ENCODE measurements at regions of chr1 and their contacts with region 1.

Region 1: GRCh38 chr1:152440635-152441471 is 26.8 kb upstream of the CRNN start:
- DNase-seq: peak; percentile 57
- H3K4me3 ChIP-seq: no peak overlapping the region
- H3K27ac ChIP-seq: no peak overlapping the region
- H3K4me1 ChIP-seq: no peaks in the 10 kb centered on the region
- H3K27me3 ChIP-seq: peaks cover 0 to 4% of the 10 kb centered on the region in 2 experiments
- CTCF ChIP-seq: peak; percentile 73 to 87
- POLR2A ChIP-seq: no peak

Region 2: DNA sequence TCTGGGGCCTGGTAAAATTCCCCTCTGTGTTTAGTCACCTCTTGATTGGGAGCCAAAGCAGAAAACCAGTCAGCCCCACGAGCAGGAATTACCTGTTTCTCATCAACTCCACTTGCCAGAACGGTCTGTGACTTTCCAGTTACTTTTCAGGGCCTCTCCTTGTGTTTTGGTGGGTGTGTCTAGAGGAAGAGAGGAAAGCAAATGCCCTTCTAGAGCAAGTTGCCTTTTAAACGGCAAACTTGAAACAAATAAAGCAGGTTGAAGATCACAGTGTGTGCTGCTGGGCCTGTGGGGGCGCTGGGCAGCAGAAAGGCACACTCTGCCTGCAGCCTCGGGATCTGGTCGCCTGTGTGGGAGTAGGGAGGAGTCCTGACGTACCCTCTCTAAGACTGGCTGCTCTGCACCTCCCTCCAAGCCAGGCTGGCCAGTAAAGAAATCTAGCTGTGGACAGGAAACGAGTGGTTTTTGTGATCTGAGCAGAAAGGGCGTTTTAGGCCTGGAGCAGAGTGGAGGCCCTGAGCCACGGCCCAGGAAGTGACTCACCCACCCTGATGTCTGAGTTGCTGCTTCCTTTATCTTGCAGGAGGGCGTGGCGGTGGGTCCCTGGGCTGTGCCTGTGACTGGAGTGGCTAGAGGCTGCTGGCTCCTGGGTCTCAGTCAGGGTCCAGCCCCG is 393.0 kb before region 1 on chr1:
- CTCF ChIA-PET with region 1: interaction called, 3 read pairs
- POLR2A ChIA-PET with region 1: no interaction called
- dilution Hi-C with region 1: no loop called
- intact Hi-C with region 1: loop called (anchors 2 kb)
- DNase-seq: peak; percentile 91
- H3K4me3 ChIP-seq: no peak overlapping the region
- H3K27ac ChIP-seq: peak overlapping the region; percentile 25
- H3K4me1 ChIP-seq: peaks cover 18% of the 10 kb centered on the region
- H3K27me3 ChIP-seq: peaks cover 7 to 27% of the 10 kb centered on the region in 2 experiments
- CTCF ChIP-seq: peak; percentile 61 to 80
- POLR2A ChIP-seq: no peak

Region 3: DNA sequence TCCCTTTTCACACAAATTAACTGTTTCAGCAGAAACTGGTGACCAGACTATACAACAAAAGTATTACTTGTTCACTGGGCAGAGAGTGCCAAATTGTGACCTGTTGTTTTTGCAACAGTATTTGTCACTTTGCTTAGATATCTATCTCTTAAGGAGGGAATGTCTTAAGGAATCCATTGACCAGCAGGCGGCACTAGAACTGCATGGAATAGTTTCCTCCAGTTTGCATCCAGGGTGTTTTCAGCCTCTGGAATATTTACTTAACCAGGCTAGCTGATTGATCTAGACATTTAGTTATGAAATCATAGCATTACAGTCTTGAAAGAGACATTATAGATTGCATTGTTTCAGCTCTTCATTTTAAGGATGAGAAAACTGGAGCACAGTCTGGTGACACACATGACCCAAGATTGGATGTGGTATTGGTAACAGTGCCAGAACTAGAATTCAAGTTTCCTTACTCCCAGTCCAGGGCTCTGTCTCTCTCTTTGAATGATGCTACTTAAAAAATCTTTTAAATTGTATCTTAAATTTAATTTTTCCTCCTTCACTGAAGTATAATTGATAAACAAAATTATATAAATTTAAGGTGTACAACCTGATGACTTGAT is 298.8 kb before region 1 on chr1:
- CTCF ChIA-PET with region 1: interaction called, 4 read pairs
- POLR2A ChIA-PET with region 1: no interaction called
- dilution Hi-C with region 1: no loop called
- intact Hi-C with region 1: loop called (anchors 1 kb)
- DNase-seq: peak; percentile 57
- H3K4me3 ChIP-seq: no peak overlapping the region
- H3K27ac ChIP-seq: no peak overlapping the region
- H3K4me1 ChIP-seq: no peaks in the 10 kb centered on the region
- H3K27me3 ChIP-seq: no peaks in the 10 kb centered on the region
- CTCF ChIP-seq: peak; percentile 63 to 65
- POLR2A ChIP-seq: no peak

Region 4: GRCh38 chr1:152189657-152190442 is 251.0 kb before region 1 on chr1:
- CTCF ChIA-PET with region 1: interaction called, 22 read pairs
- POLR2A ChIA-PET with region 1: no interaction called
- dilution Hi-C with region 1: no loop called
- intact Hi-C with region 1: loop called (anchors 1 kb)
- DNase-seq: peak; percentile 65
- H3K4me3 ChIP-seq: peak overlapping the region in 2 of 3 experiments; percentile 43 to 48
- H3K27ac ChIP-seq: no peak overlapping the region
- H3K4me1 ChIP-seq: peaks cover 5% of the 10 kb centered on the region
- H3K27me3 ChIP-seq: peaks cover 0 to 4% of the 10 kb centered on the region in 2 experiments
- CTCF ChIP-seq: peak; percentile 65 to 72
- POLR2A ChIP-seq: no peak

Region 5: DNA sequence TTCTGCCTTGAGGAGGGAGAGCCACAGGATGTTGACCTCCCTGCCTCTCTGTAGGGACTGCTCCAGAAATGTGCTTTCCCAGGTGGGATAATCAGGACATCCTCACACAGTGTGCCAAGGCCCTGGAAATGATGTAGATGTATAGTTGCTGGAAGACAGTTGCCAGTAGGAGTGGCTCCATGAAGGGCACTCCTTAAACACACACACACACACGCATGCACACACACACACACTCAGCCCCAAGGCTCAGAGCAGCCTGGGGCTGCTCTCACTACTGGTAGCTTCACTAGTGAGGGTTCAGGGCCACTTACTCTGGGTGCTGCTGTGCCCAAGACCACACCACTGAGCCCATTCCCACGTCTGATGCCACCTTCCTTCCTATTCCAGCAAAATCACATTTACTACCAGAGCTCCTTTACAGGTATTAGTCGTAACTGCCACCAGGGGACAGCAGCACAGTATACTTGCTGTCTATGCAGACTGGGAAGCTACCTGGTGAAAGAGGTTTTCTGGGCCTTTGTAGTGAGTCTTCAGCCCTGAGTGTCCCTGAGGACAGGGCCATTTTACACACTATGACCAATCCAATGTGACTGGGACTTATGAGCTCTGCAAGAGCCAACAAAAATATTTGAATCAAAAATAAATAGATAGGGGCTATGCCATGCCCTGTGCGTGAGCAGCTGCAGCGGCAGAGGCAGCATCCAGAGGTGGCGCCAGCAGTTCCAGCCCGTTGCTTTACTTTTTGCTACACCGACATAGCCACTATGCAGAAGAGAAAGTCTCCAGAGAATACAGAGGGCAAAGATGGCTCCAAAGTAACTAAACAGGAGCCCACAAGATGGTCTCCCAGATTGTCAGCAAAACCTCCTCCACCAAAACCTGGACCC is 41.8 kb before region 1 on chr1:
- CTCF ChIA-PET with region 1: interaction called, 33 read pairs
- POLR2A ChIA-PET with region 1: no interaction called
- dilution Hi-C with region 1: no loop called
- intact Hi-C with region 1: loop called (anchors 5 kb)
- DNase-seq: no peak
- H3K4me3 ChIP-seq: no peak overlapping the region
- H3K27ac ChIP-seq: no peak overlapping the region
- H3K4me1 ChIP-seq: no peaks in the 10 kb centered on the region
- H3K27me3 ChIP-seq: no peaks in the 10 kb centered on the region
- CTCF ChIP-seq: peak in 1 of 2 donors; percentile 19
- POLR2A ChIP-seq: no peak

Region 6: DNA sequence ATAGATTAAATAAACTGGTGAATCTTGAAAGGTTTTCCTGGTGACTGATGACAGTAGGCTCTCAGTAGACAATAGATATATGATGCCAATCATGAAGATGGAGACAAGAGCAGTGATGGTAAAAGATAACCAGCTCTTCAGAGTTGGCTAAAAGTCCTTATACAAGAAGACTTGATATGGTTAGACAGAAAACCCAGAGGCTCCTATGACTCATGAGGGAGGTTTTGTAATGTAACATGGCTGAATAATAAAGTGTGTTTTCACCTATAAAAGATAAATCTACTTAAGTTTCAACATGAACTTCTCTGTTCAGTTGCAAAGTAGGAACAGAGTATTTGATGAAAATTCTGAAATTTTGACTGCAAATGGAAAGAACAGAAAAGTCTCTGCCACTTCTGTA is 14.1 kb before region 1 on chr1:
- CTCF ChIA-PET with region 1: interaction called, 23 read pairs
- POLR2A ChIA-PET with region 1: no interaction called
- dilution Hi-C with region 1: no loop called
- intact Hi-C with region 1: no loop called
- DNase-seq: no peak
- H3K4me3 ChIP-seq: no peak overlapping the region
- H3K27ac ChIP-seq: no peak overlapping the region
- H3K4me1 ChIP-seq: no peaks in the 10 kb centered on the region
- H3K27me3 ChIP-seq: no peaks in the 10 kb centered on the region
- CTCF ChIP-seq: no peak
- POLR2A ChIP-seq: no peak